ENCODE measurements at regions of chr17 and their contacts with region 1.

Region 1: DNA sequence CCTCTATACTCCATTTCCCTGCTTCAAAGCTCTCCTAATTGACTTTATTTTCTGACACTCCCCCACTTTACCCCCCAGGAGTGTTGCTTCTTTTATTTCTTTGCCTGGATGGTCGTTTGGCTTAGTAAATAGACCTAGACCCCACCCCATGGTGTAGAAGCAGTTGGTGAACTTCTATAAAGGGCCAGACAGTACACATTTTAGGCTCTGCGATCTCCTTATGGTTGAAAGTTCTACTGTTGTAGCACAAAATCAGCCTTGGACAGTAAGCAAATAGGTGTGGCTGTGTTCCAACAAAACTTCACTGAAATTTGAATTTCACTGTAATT is 31.9 kb downstream of the ZNF287 start:
- DNase-seq: no peak
- H3K4me3 Mint-ChIP-seq: no peak overlapping the region
- H3K27ac Mint-ChIP-seq: no peak overlapping the region
- H3K4me1 Mint-ChIP-seq: peaks cover 15% of the 10 kb centered on the region
- H3K27me3 Mint-ChIP-seq: no peaks in the 10 kb centered on the region

Region 2: GRCh38 chr17:16215273-16215964 is 321.7 kb before region 1 on chr17 and contains the start of gene NCOR1:
- CTCF ChIA-PET with region 1: no interaction called
- intact Hi-C with region 1: loop called (anchors 1 kb)
- DNase-seq: peak; percentile 93
- H3K4me3 Mint-ChIP-seq: peak within 1 kb of the TSS; percentile 99
- H3K27ac Mint-ChIP-seq: peak within 1 kb of the TSS; percentile 95
- H3K4me1 Mint-ChIP-seq: peaks cover 44% of the 10 kb centered on the region
- H3K27me3 Mint-ChIP-seq: no peaks in the 10 kb centered on the region
- total RNA-seq, gene NCOR1: 101 to 104 TPM

Region 3: DNA sequence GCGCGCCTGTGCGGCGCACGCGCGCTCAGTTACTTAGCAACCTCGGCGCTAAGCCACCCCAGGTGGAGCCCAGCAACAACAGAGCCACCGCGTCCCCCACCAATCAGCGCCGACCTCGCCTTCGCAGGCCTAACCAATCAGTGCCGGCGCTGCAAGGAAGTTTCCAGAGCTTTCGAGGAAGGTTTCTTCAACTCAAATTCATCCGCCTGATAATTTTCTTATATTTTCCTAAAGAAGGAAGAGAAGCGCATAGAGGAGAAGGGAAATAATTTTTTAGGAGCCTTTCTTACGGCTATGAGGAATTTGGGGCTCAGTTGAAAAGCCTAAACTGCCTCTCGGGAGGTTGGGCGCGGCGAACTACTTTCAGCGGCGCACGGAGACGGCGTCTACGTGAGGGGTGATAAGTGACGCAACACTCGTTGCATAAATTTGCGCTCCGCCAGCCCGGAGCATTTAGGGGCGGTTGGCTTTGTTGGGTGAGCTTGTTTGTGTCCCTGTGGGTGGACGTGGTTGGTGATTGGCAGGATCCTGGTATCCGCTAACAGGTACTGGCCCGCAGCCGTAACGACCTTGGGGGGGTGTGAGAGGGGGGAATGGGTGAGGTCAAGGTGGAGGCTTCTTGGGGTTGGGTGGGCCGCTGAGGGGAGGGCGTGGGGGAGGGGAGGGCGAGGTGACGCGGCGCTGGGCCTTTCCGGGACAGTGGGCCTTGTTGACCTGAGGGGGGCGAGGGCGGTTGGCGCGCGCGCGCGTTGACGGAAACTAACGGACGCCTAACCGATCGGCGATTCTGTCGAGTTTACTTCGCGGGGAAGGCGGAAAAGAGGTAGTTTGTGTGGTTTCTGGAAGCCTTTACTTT is 156.2 kb before region 1 on chr17 and contains the start of gene UBB:
- CTCF ChIA-PET with region 1: no interaction called
- intact Hi-C with region 1: loop called (anchors 1 kb)
- DNase-seq: peak; percentile 96
- H3K4me3 Mint-ChIP-seq: peak within 1 kb of the TSS; percentile 90
- H3K27ac Mint-ChIP-seq: peak within 1 kb of the TSS; percentile 96
- H3K4me1 Mint-ChIP-seq: peaks cover 35% of the 10 kb centered on the region
- H3K27me3 Mint-ChIP-seq: no peaks in the 10 kb centered on the region
- total RNA-seq, gene UBB: 1,579 to 1,628 TPM

Region 4: GRCh38 chr17:16453493-16453851 is 83.6 kb before region 1 on chr17:
- CTCF ChIA-PET with region 1: interaction called, 10 read pairs
- intact Hi-C with region 1: no loop called
- DNase-seq: no peak
- H3K4me3 Mint-ChIP-seq: no peak overlapping the region
- H3K27ac Mint-ChIP-seq: no peak overlapping the region
- H3K4me1 Mint-ChIP-seq: peaks cover 11% of the 10 kb centered on the region
- H3K27me3 Mint-ChIP-seq: no peaks in the 10 kb centered on the region

Region 5: GRCh38 chr17:16552637-16553045 is 15.5 kb after region 1 on chr17:
- CTCF ChIA-PET with region 1: no interaction called
- intact Hi-C with region 1: no loop called
- DNase-seq: no peak
- H3K4me3 Mint-ChIP-seq: no peak overlapping the region
- H3K27ac Mint-ChIP-seq: no peak overlapping the region
- H3K4me1 Mint-ChIP-seq: peaks cover 4% of the 10 kb centered on the region
- H3K27me3 Mint-ChIP-seq: no peaks in the 10 kb centered on the region

Region 6: DNA sequence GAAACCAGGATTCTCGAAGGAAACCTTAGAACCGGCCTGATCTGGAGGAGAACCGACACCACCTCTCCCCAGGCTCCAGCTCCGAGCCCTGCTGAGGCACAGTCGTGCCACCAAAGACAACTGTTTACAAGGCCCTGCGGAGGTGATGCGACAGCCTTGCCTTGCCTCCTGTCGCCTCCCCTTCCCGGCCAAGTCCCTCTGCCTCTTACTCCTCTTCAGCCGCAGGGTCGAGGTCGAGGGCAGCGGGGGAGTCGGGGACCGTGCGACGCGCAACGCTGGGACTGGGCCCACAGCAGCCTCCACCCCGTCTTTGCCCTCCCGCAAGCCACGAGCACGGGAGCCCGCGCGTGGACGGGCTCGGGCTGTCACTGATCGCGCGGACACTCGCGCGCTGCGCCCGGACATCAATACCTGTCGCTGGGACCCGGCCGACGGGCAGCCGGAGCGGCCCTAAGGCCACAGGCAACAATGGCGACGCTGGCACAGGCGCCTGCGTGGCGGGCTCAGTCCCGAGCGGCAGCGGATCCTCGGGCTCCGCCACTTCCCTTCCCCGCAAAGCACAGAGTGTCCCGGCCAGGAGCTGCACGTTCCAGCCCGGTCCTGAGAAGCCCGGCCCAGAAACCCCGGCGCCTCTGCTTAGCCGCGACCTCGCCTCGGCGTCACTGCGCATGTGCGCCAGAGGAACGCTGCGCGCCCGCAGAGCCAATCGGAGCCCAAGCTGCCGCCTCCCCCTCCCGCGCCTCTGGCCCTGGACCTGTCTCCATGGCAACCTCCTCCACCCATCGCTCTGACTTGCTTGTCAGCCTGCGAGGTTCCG is 31.7 kb after region 1 on chr17 and contains the start of gene ZNF287:
- CTCF ChIA-PET with region 1: interaction called, 4 read pairs
- intact Hi-C with region 1: loop called (anchors 1 kb)
- DNase-seq: peak; percentile 94
- H3K4me3 Mint-ChIP-seq: peak within 1 kb of the TSS; percentile 80
- H3K27ac Mint-ChIP-seq: no peak within 1 kb of the TSS
- H3K4me1 Mint-ChIP-seq: peaks cover 13% of the 10 kb centered on the region
- H3K27me3 Mint-ChIP-seq: no peaks in the 10 kb centered on the region
- total RNA-seq, gene ZNF287: 5.1 to 6.3 TPM

Region 7: DNA sequence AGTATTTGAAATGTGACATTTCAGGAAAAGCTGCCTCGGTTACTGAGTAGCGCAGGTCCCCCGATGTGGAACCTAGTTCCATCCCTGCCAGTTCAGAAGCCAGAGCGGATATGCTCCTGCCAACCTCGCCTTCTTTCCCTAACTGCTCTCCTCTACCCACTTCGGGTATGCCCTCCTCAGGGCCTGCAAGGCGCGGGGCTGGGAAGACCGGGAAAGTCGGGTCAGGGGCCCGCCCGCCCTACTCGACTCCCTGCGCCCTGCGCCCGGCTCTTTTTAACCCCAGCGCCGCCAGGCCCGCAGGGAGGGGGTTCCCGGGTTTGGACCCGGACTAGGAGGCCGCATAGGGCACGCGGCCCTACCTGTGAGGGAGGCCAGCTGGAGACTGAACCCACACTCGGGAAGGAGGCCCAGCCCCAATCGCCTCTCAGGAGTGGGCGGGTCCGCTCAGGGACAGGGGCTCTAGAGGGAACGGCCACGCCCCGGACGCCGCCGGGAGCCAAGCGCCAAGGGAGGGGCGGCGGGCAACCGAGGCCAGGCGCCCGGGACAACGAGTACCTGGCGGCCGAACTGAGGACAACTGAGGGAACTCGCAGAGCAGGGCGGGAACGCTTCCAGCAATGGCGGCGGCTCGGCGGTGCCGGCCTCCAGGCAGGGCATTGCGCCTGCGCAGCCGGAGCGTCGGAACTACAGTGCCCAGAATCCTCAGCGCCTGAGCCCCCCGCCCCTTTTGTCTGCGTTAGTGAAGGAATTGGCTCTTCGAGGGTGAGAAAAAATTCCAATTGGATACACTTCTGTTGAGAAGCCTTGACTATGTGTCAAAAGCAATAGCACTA is 116.3 kb after region 1 on chr17 and contains the start of gene ZNF624:
- CTCF ChIA-PET with region 1: interaction called, 4 read pairs
- intact Hi-C with region 1: loop called (anchors 2 kb)
- DNase-seq: peak; percentile 91
- H3K4me3 Mint-ChIP-seq: peak within 1 kb of the TSS; percentile 82
- H3K27ac Mint-ChIP-seq: peak within 1 kb of the TSS; percentile 33
- H3K4me1 Mint-ChIP-seq: peaks cover 17% of the 10 kb centered on the region
- H3K27me3 Mint-ChIP-seq: peaks cover 2% of the 10 kb centered on the region
- total RNA-seq, gene ZNF624: 3.9 TPM

Region 8: GRCh38 chr17:16987830-16988601 is 450.9 kb after region 1 on chr17:
- CTCF ChIA-PET with region 1: interaction called, 3 read pairs
- intact Hi-C with region 1: loop called (anchors 5 kb)
- DNase-seq: peak; percentile 71
- H3K4me3 Mint-ChIP-seq: no peak overlapping the region
- H3K27ac Mint-ChIP-seq: no peak overlapping the region
- H3K4me1 Mint-ChIP-seq: peaks cover 30% of the 10 kb centered on the region
- H3K27me3 Mint-ChIP-seq: no peaks in the 10 kb centered on the region

Region 9: DNA sequence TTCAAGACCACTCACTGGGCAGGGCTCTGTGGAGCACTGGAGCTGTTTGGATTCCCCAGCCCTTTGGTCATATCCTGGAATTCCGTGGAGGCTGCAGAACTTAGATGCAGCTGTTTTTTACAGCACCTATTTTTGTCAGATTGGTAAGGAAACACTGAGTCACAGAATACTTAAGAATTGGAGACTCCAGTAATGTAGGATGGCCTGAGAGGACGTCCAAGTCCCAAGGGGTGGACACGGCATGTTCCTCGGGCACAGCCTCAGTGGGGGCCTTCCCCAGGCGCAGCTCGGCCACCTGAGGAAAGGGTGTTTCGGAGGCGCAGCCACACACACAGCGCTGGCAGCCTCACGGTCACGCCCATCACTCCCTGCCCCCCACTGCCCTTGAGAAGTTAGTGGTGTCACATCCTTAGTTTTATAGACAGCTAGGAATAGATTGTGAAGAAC is 654.3 kb after region 1 on chr17:
- CTCF ChIA-PET with region 1: no interaction called
- intact Hi-C with region 1: no loop called
- DNase-seq: no peak
- H3K4me3 Mint-ChIP-seq: no peak overlapping the region
- H3K27ac Mint-ChIP-seq: no peak overlapping the region
- H3K4me1 Mint-ChIP-seq: peaks cover 6% of the 10 kb centered on the region
- H3K27me3 Mint-ChIP-seq: no peaks in the 10 kb centered on the region